ENCODE measurements at regions of chr17 and their contacts with region 1.

Region 1: GRCh38 chr17:79393358-79394202 is 217.3 kb downstream of the RBFOX3 start:
- DNase-seq: no peak
- H3K4me3 ChIP-seq: no peak overlapping the region
- CTCF ChIP-seq: peak; percentile 97

Region 2: DNA sequence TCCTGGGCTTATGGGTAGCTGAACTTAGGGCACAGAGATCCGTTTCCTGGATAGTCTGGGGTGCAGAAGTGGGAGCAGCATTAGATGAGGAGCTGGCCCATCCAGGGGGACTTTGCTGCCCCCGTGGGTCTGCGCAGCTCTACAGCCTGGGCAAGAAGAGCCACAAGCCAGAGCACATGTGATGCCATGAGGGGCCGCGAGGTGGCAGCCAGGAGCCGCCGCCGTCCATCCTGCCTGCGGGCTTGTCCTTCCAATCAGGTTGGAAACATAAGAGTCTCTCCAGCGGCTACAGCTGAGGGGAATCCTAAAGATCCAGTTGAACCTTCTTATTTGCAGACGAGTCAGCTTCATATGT is 347.8 kb before region 1 on chr17:
- CTCF ChIA-PET with region 1: interaction called, 138 read pairs
- POLR2A ChIA-PET with region 1: no interaction called
- DNase-seq: no peak
- H3K4me3 ChIP-seq: no peak overlapping the region
- CTCF ChIP-seq: peak; percentile 98

Region 3: GRCh38 chr17:79074650-79075445 is 318.7 kb before region 1 on chr17 and contains the start of gene ENGASE:
- CTCF ChIA-PET with region 1: interaction called, 12 read pairs
- POLR2A ChIA-PET with region 1: no interaction called
- DNase-seq: peak; percentile 14
- H3K4me3 ChIP-seq: peak within 1 kb of the TSS; percentile 65
- CTCF ChIP-seq: no peak

Region 4: GRCh38 chr17:79104898-79105600 is 288.5 kb before region 1 on chr17:
- CTCF ChIA-PET with region 1: interaction called, 13 read pairs
- POLR2A ChIA-PET with region 1: no interaction called
- DNase-seq: no peak
- H3K4me3 ChIP-seq: no peak overlapping the region
- CTCF ChIP-seq: no peak

Region 5: GRCh38 chr17:79382322-79382721 is 11.3 kb before region 1 on chr17:
- CTCF ChIA-PET with region 1: interaction called, 21 read pairs
- POLR2A ChIA-PET with region 1: no interaction called
- DNase-seq: no peak
- H3K4me3 ChIP-seq: no peak overlapping the region
- CTCF ChIP-seq: no peak

Region 6: DNA sequence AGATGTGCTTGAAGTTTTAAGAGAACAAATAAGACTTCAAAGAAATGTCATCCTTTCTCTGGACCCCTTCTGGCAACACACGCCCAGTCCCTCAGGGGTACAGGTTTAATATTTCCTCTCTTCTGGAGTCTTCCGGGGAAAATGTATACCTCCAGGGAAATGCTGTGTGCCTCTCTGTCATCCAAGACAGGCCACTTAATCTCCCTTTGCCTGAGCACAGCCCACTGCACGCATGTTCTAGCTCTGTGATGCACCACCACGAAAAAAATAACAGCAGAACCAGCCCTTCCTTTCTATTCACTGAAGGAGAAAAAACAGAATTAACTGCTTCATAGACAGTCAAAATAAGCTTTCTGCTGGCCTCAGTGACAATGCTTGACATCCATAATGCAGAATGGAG is 77.2 kb after region 1 on chr17:
- CTCF ChIA-PET with region 1: no interaction called
- POLR2A ChIA-PET with region 1: no interaction called
- DNase-seq: no peak
- H3K4me3 ChIP-seq: no peak overlapping the region
- CTCF ChIP-seq: no peak

Measured in AG04449 (cell line).